Right ventricle myocardium inferior (tissue), 1 donor: ENCODE measurements at regions of chr17 and their contacts with region 1.

Region 1: GRCh38 chr17:67602956-67603355 is 114.8 kb upstream of the NOL11 start:
- DNase-seq: no peak
- ATAC-seq: peak; percentile 23

Region 2: GRCh38 chr17:67491009-67491680 is 111.8 kb before region 1 on chr17:
- intact Hi-C with region 1: loop called (anchors 5 kb)
- DNase-seq: peak; percentile 94
- ATAC-seq: peak; percentile 97

Region 3: DNA sequence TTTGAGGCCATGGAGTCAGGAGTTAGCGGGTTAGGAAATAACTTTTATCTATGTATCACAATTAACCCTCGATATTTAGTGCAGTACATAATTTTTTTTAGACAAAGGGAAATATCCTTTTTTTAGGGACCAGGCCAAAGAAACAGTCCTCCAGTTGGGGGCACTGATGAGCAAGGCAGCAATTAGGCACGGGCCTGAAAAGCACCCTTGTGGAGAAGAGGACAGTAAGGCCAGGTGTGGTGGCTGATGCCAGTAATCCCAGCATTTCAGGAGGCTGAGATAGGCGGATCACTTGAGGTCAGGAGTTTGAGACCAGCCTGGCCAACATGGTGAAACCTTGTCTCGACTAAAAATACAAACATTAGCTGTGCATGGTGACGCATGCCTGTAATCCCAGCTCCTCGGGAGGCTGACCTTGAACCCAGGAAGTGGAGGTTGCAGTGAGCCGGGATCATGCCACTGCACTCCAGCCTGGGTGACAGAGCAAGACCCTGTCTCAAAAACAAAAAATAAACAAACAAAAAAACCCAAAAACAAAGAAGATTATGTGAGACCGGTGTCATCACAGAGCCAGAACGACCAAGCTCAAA is 43.5 kb before region 1 on chr17:
- intact Hi-C with region 1: loop called (anchors 5 kb)
- DNase-seq: no peak
- ATAC-seq: no peak

Region 4: GRCh38 chr17:67629971-67630320 is 27.0 kb after region 1 on chr17:
- intact Hi-C with region 1: loop called (anchors 2 kb)
- DNase-seq: no peak
- ATAC-seq: peak; percentile 51